Activated CD8-positive, alpha-beta T cell treated with anti-CD3 and anti-CD28 coated beads for 36 hours (primary cell): ENCODE measurements at regions of chr5 and their contacts with region 1.

Region 1: DNA sequence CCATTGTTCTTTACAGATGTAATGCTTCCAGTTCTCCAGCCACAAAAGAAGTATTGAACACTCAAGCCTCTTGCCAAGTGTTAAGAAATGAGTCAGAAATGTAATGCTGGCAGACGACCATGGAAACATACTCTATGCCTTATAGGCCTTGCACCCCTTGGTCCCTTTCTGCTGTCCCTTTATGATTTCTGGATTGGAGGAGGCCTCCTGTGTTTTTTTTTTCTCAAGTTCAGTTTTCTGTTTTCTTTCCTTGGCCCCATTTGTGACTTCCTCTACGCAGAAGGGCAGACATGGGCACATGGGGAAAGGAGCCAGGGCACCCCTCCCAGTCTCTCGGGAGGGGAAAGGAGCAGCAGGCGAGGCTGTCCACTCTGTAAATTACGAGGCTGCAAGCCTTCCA is 53.4 kb downstream of the SNX18 start:
- DNase-seq: no peak
- ATAC-seq: no peak
- H3K4me3 Mint-ChIP-seq: no peak overlapping the region
- H3K27ac Mint-ChIP-seq: no peak overlapping the region
- H3K4me1 Mint-ChIP-seq: peaks cover 10% of the 10 kb centered on the region
- H3K27me3 Mint-ChIP-seq: no peaks in the 10 kb centered on the region
- CTCF ChIP-seq: no peak

Region 2: DNA sequence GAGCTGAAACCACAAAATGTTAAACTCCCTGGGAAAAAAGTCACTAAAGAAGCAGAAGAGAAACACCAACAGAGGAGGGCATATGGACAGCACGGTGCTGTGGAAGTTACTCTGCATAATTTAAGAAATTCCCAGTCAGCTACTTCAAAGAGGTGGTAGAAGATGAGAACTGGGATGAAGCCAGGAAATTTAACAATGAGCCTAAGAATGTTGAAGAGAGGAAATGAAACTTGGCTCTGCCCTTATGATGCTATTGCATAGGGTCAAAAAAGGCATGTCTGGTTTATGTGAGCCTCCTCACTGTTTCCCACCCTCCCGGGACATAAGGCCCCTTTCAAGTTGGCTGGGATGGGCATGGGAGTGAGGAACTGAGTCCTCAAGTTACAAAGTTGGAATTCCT is 78.7 kb before region 1 on chr5:
- CTCF ChIA-PET with region 1: no interaction called
- POLR2A ChIA-PET with region 1: no interaction called
- intact Hi-C with region 1: no loop called
- DNase-seq: no peak
- ATAC-seq: no peak
- H3K4me3 Mint-ChIP-seq: no peak overlapping the region
- H3K27ac Mint-ChIP-seq: no peak overlapping the region
- H3K4me1 Mint-ChIP-seq: no peaks in the 10 kb centered on the region
- H3K27me3 Mint-ChIP-seq: peaks cover 2% of the 10 kb centered on the region
- CTCF ChIP-seq: no peak

Region 3: GRCh38 chr5:54637654-54638053 is 66.7 kb after region 1 on chr5:
- CTCF ChIA-PET with region 1: no interaction called
- POLR2A ChIA-PET with region 1: no interaction called
- intact Hi-C with region 1: loop called (anchors 10 kb)
- DNase-seq: no peak
- ATAC-seq: no peak
- H3K4me3 Mint-ChIP-seq: no peak overlapping the region
- H3K27ac Mint-ChIP-seq: no peak overlapping the region
- H3K4me1 Mint-ChIP-seq: peaks cover 11% of the 10 kb centered on the region
- H3K27me3 Mint-ChIP-seq: no peaks in the 10 kb centered on the region
- CTCF ChIP-seq: no peak